GM13976 (cell line): ENCODE measurements at regions of chr7 and their contacts with region 1.

Region 1: DNA sequence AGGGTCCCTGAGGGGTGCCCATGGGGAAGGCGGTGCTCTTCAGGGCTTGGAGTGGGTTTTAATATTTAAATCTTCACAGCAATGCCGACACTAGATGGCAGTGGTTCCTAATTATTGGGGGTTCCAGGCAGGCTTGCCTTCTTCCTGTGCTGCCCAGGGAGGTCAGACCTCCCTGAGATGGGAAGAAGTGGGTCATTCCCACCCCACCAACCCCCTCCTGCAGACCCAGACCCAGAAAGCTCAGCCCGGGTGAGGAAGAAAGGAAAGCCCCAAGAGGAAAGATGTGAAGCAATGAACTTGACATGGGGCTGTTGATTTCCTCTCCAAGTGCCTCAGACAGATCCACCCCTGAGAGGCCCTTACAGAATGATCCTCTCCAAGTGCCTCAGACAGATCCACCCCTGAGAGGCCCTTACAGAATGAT is 85.1 kb upstream of the LANCL2 start:
- DNase-seq: peak; percentile 75
- CTCF ChIP-seq: peak; percentile 74

Region 2: GRCh38 chr7:55415173-55415778 is 135.2 kb after region 1 on chr7:
- in situ Hi-C with region 1: loop called (anchors 10 kb)
- DNase-seq: peak; percentile 84
- CTCF ChIP-seq: peak; percentile 60

Region 3: DNA sequence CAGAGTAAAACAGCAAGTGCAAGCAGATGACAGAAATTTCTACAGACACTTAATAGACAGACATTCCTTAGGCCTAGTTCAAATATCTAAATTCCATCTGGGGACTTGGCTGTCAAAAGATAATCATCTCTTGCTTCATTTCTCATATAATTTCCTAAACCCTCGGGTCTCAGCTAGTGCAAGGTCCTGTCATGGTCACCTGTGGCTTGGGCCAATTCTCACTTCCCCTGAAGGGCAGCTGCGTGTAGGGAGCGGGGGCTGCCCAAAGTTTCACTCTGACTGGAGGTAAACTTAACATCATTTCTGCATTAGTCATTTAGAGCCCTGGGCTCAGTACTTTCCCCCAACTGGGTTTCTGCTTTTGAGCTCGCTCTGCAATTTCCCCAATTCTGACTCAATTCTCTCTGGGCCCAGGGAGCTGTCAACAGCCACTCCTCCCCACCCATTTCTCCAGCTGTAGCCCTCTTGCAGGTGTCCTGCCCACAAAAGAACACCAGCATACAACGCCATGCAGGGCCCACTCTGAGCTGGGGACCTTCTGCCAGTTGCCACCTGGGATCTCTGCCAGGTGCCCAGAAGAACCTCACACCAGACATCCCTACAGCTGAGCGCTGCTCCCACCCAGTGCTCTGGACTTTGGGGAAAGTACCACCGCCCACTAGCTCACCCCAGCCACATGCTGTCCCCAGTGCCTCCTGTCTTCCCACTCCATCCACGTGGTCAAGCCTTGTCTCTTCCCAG is 254.3 kb after region 1 on chr7:
- in situ Hi-C with region 1: loop called (anchors 25 kb)
- DNase-seq: peak; percentile 86
- CTCF ChIP-seq: no peak

Region 4: DNA sequence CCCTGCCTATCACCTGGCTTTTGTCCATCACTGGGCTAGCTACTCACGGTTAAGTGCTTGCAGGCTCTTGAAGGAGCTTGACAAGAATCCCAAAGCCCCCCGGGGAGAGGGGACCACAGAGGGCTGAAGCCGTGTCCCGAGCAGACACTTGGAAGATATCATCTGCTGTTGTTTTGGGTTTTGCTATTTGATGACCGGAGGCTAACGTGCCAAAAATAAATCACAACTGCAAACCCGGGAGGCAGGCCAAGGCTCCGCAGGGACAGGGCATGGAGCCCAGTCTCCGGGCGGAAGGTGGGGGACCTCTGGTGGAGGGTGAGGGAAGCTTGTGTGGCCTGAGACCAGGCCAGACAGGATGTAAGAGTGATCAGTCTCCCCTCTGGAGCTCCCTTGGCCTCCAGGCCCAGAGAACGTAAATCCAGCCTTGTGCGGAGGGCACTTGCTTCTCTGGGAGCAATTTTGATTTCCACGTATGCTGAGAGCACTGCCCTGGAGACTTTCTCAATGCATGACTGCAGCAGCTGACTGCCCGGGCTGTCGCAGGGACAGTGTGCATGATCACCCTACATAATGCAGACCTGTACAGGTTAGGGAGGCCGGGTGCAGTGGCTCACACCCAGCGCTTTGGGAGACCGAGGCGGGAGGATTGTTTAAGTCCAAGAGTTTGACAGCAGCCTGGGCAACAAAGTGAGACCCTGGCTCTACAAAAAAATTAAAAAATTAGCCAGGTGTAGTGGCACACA is 812.9 kb after region 1 on chr7 and contains the start of gene PHKG1:
- in situ Hi-C with region 1: loop called (anchors 25 kb)
- DNase-seq: peak; percentile 19
- CTCF ChIP-seq: no peak